Naive thymus-derived CD4-positive, alpha-beta T cell (primary cell): ENCODE measurements at regions of chr4 and their contacts with region 1.

Region 1: GRCh38 chr4:153573881-153574802 is 108.0 kb downstream of the TMEM131L start:
- DNase-seq: peak; percentile 12 to 77 (median 69)
- ATAC-seq: peak; percentile 94
- H3K4me3 ChIP-seq: no peak overlapping the region
- H3K4me3 Mint-ChIP-seq: peak overlapping the region; percentile 7 to 61 (median 42)
- H3K27ac ChIP-seq: peak overlapping the region; percentile 11
- H3K27ac Mint-ChIP-seq: peak overlapping the region; percentile 30 to 85 (median 83)
- H3K4me1 ChIP-seq: peaks cover 12 to 36% of the 10 kb centered on the region in 2 donors
- H3K4me1 Mint-ChIP-seq: peaks cover 46 to 84% (median 74%) of the 10 kb centered on the region in 7 donors
- H3K27me3 ChIP-seq: no peaks in the 10 kb centered on the region
- H3K27me3 Mint-ChIP-seq: no peaks in the 10 kb centered on the region

Region 2: DNA sequence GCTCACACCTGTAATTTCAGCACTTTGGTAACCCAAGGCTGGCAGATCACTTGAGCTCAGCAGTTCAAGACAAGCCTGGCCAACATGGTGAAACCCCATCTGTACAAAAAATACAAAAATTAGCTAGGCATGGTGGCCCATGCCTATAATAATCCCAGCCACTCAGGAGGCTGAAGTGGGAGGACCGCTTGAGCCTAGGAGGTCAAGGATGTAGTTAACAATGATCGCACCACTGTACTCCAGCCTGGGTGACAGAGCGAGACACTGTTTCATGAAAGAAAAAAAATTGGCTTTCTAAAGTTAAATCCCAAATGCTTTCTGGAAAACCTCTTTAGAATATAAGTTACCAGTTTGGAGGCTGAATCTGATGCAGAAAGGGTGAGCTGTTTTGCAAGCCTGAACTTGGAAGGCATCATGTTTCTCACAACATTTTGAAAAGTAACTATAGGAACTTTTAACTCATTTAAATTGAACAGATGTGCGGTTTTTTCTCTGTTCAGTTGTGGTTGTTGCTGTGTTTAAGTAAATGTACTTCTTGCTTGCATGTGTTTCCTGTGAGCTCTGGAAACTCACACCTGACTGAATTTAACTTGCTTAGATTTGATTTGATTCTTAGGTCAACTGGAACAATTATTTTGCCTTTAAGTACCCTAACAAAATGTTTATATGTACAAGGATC is 147.8 kb before region 1 on chr4:
- CTCF ChIA-PET with region 1: interaction called, 17 read pairs
- POLR2A ChIA-PET with region 1: interaction called, 17 read pairs
- intact Hi-C with region 1: no loop called
- DNase-seq: peak in 7 of 9 donors; percentile 68 to 89 (median 82)
- ATAC-seq: peak; percentile 88
- H3K4me3 ChIP-seq: peak overlapping the region; percentile 5
- H3K4me3 Mint-ChIP-seq: peak overlapping the region in 9 of 10 donors; percentile 47 to 80 (median 76)
- H3K27ac ChIP-seq: peak overlapping the region; percentile 79
- H3K27ac Mint-ChIP-seq: peak overlapping the region; percentile 88 to 98 (median 96)
- H3K4me1 ChIP-seq: peaks cover 18 to 57% of the 10 kb centered on the region in 2 donors
- H3K4me1 Mint-ChIP-seq: peaks cover 22 to 69% (median 62%) of the 10 kb centered on the region in 7 donors
- H3K27me3 ChIP-seq: no peaks in the 10 kb centered on the region
- H3K27me3 Mint-ChIP-seq: no peaks in the 10 kb centered on the region

Region 3: GRCh38 chr4:153466081-153466948 is 107.8 kb before region 1 on chr4 and contains the start of gene TMEM131L:
- CTCF ChIA-PET with region 1: interaction called, 35 read pairs
- POLR2A ChIA-PET with region 1: interaction called, 13 read pairs
- intact Hi-C with region 1: loop called (anchors 1 kb)
- DNase-seq: peak; percentile 63 to 77 (median 69)
- ATAC-seq: peak; percentile 91
- H3K4me3 ChIP-seq: peak within 1 kb of the TSS; percentile 75
- H3K4me3 Mint-ChIP-seq: peak within 1 kb of the TSS; percentile 94 to 100 (median 96)
- H3K27ac ChIP-seq: peak within 1 kb of the TSS; percentile 91
- H3K27ac Mint-ChIP-seq: peak within 1 kb of the TSS; percentile 93 to 99 (median 98)
- H3K4me1 ChIP-seq: peaks cover 29 to 32% of the 10 kb centered on the region in 2 donors
- H3K4me1 Mint-ChIP-seq: peaks cover 32 to 61% (median 44%) of the 10 kb centered on the region in 7 donors
- H3K27me3 ChIP-seq: no peaks in the 10 kb centered on the region
- H3K27me3 Mint-ChIP-seq: no peaks in the 10 kb centered on the region
- total RNA-seq, gene TMEM131L: 45.8 to 111 (median 97.7) TPM

Region 4: GRCh38 chr4:153521999-153522801 is 51.9 kb before region 1 on chr4:
- CTCF ChIA-PET with region 1: interaction called, 4 read pairs
- POLR2A ChIA-PET with region 1: interaction called, 4 read pairs
- intact Hi-C with region 1: loop called (anchors 1 kb)
- DNase-seq: peak in 8 of 9 donors; percentile 52 to 82 (median 78)
- ATAC-seq: peak; percentile 73
- H3K4me3 ChIP-seq: peak overlapping the region; percentile 50
- H3K4me3 Mint-ChIP-seq: peak overlapping the region; percentile 80 to 90 (median 84)
- H3K27ac ChIP-seq: peak overlapping the region; percentile 68
- H3K27ac Mint-ChIP-seq: peak overlapping the region; percentile 88 to 96 (median 93)
- H3K4me1 ChIP-seq: peaks cover 75 to 87% of the 10 kb centered on the region in 2 donors
- H3K4me1 Mint-ChIP-seq: peaks cover 85 to 99% (median 98%) of the 10 kb centered on the region in 7 donors
- H3K27me3 ChIP-seq: no peaks in the 10 kb centered on the region
- H3K27me3 Mint-ChIP-seq: no peaks in the 10 kb centered on the region

Region 5: GRCh38 chr4:153585026-153585425 is 10.9 kb after region 1 on chr4:
- CTCF ChIA-PET with region 1: interaction called, 3 read pairs
- POLR2A ChIA-PET with region 1: interaction called, 5 read pairs
- intact Hi-C with region 1: loop called in 1 of 2 experiments (anchors 1 kb)
- DNase-seq: no peak
- ATAC-seq: no peak
- H3K4me3 ChIP-seq: no peak overlapping the region
- H3K4me3 Mint-ChIP-seq: no peak overlapping the region
- H3K27ac ChIP-seq: no peak overlapping the region
- H3K27ac Mint-ChIP-seq: peak overlapping the region in 8 of 9 donors; percentile 61 to 87 (median 74)
- H3K4me1 ChIP-seq: no peaks in the 10 kb centered on the region
- H3K4me1 Mint-ChIP-seq: peaks cover 8 to 65% (median 33%) of the 10 kb centered on the region in 7 donors
- H3K27me3 ChIP-seq: no peaks in the 10 kb centered on the region
- H3K27me3 Mint-ChIP-seq: no peaks in the 10 kb centered on the region